ENCODE measurements at regions of chr19 and their contacts with region 1.

Region 1: GRCh38 chr19:17570791-17571190 is 15.3 kb downstream of the COLGALT1 start:
- DNase-seq: no peak
- ATAC-seq: no peak
- H3K4me3 ChIP-seq: no peak overlapping the region
- H3K27ac ChIP-seq: no peak overlapping the region
- H3K4me1 ChIP-seq: peaks cover 4% of the 10 kb centered on the region
- H3K27me3 ChIP-seq: no peaks in the 10 kb centered on the region
- CTCF ChIP-seq: no peak

Region 2: GRCh38 chr19:17450264-17451075 is 120.3 kb before region 1 on chr19:
- intact Hi-C with region 1: loop called (anchors 5 kb)
- DNase-seq: no peak
- ATAC-seq: no peak
- H3K4me3 ChIP-seq: no peak overlapping the region
- H3K27ac ChIP-seq: no peak overlapping the region
- H3K4me1 ChIP-seq: peaks cover 4% of the 10 kb centered on the region
- H3K27me3 ChIP-seq: peaks cover 0 to 61% (median 11%) of the 10 kb centered on the region in 3 donors
- CTCF ChIP-seq: no peak

Region 3: GRCh38 chr19:17455308-17456123 is 115.3 kb before region 1 on chr19:
- intact Hi-C with region 1: loop called (anchors 5 kb)
- DNase-seq: no peak
- ATAC-seq: no peak
- H3K4me3 ChIP-seq: no peak overlapping the region
- H3K27ac ChIP-seq: no peak overlapping the region
- H3K4me1 ChIP-seq: peaks cover 4% of the 10 kb centered on the region
- H3K27me3 ChIP-seq: peaks cover 0 to 67% (median 15%) of the 10 kb centered on the region in 3 donors
- CTCF ChIP-seq: no peak